ENCODE measurements at regions of chr15 and their contacts with region 1.

Region 1: DNA sequence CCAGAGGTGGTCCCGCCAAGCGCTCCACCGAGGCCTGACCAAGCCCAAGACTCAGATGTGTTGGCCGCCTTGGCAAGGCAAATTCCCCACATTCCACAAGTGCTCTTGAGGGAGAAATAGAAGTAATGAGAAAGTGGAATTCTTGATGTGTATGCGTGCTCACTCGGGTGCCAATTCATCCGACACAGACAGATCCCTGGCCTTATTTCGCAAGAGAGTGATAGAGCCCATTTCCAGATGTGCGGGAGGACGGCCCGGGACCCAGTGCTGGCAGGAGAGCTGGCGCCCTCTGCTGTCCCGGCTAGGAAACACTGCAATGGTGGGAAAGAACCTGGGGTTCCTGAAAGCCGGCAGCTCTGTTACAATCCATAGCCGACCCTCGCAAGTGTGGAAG is 76.0 kb downstream of the HMG20A start:
- DNase-seq: peak; percentile 50 to 82 (median 73)
- ATAC-seq: peak; percentile 73
- H3K4me3 ChIP-seq: no peak overlapping the region
- H3K4me3 Mint-ChIP-seq: no peak overlapping the region
- H3K27ac ChIP-seq: no peak overlapping the region
- H3K27ac Mint-ChIP-seq: no peak overlapping the region
- H3K4me1 ChIP-seq: peaks cover 9% of the 10 kb centered on the region
- H3K4me1 Mint-ChIP-seq: peaks cover 17% of the 10 kb centered on the region
- H3K27me3 ChIP-seq: no peaks in the 10 kb centered on the region
- H3K27me3 Mint-ChIP-seq: no peaks in the 10 kb centered on the region
- CTCF ChIP-seq: peak; percentile 86

Region 2: GRCh38 chr15:77024271-77025082 is 472.2 kb before region 1 on chr15:
- CTCF ChIA-PET with region 1: interaction called, 3 read pairs
- POLR2A ChIA-PET with region 1: no interaction called
- intact Hi-C with region 1: loop called in 1 of 2 experiments (anchors 5 kb)
- DNase-seq: peak; percentile 39 to 83 (median 71)
- ATAC-seq: no peak
- H3K4me3 ChIP-seq: no peak overlapping the region
- H3K4me3 Mint-ChIP-seq: no peak overlapping the region
- H3K27ac ChIP-seq: peak overlapping the region in 1 of 2 experiments; percentile 85
- H3K27ac Mint-ChIP-seq: peak overlapping the region; percentile 74
- H3K4me1 ChIP-seq: peaks cover 49% of the 10 kb centered on the region
- H3K4me1 Mint-ChIP-seq: peaks cover 56% of the 10 kb centered on the region
- H3K27me3 ChIP-seq: no peaks in the 10 kb centered on the region
- H3K27me3 Mint-ChIP-seq: no peaks in the 10 kb centered on the region
- CTCF ChIP-seq: peak; percentile 96

Region 3: GRCh38 chr15:77107531-77108355 is 389.0 kb before region 1 on chr15:
- CTCF ChIA-PET with region 1: interaction called, 13 read pairs
- POLR2A ChIA-PET with region 1: no interaction called
- intact Hi-C with region 1: no loop called
- DNase-seq: peak in 7 of 9 experiments; percentile 8 to 49 (median 32)
- ATAC-seq: no peak
- H3K4me3 ChIP-seq: no peak overlapping the region
- H3K4me3 Mint-ChIP-seq: no peak overlapping the region
- H3K27ac ChIP-seq: no peak overlapping the region
- H3K27ac Mint-ChIP-seq: no peak overlapping the region
- H3K4me1 ChIP-seq: no peaks in the 10 kb centered on the region
- H3K4me1 Mint-ChIP-seq: no peaks in the 10 kb centered on the region
- H3K27me3 ChIP-seq: no peaks in the 10 kb centered on the region
- H3K27me3 Mint-ChIP-seq: no peaks in the 10 kb centered on the region
- CTCF ChIP-seq: no peak

Region 4: GRCh38 chr15:77118882-77119321 is 377.8 kb before region 1 on chr15:
- CTCF ChIA-PET with region 1: interaction called, 100 read pairs
- POLR2A ChIA-PET with region 1: interaction called, 4 read pairs
- intact Hi-C with region 1: loop called (anchors 1 kb)
- DNase-seq: peak in 6 of 9 experiments; percentile 18 to 78 (median 32)
- ATAC-seq: peak; percentile 55
- H3K4me3 ChIP-seq: no peak overlapping the region
- H3K4me3 Mint-ChIP-seq: no peak overlapping the region
- H3K27ac ChIP-seq: no peak overlapping the region
- H3K27ac Mint-ChIP-seq: no peak overlapping the region
- H3K4me1 ChIP-seq: peaks cover 3% of the 10 kb centered on the region
- H3K4me1 Mint-ChIP-seq: peaks cover 7% of the 10 kb centered on the region
- H3K27me3 ChIP-seq: no peaks in the 10 kb centered on the region
- H3K27me3 Mint-ChIP-seq: no peaks in the 10 kb centered on the region
- CTCF ChIP-seq: peak; percentile 71

Region 5: GRCh38 chr15:77186594-77187011 is 310.1 kb before region 1 on chr15:
- CTCF ChIA-PET with region 1: interaction called, 16 read pairs
- POLR2A ChIA-PET with region 1: no interaction called
- intact Hi-C with region 1: loop called (anchors 1 kb)
- DNase-seq: peak in 3 of 9 experiments; percentile 26 to 63 (median 46)
- ATAC-seq: no peak
- H3K4me3 ChIP-seq: no peak overlapping the region
- H3K4me3 Mint-ChIP-seq: no peak overlapping the region
- H3K27ac ChIP-seq: no peak overlapping the region
- H3K27ac Mint-ChIP-seq: no peak overlapping the region
- H3K4me1 ChIP-seq: peaks cover 18% of the 10 kb centered on the region
- H3K4me1 Mint-ChIP-seq: peaks cover 41% of the 10 kb centered on the region
- H3K27me3 ChIP-seq: no peaks in the 10 kb centered on the region
- H3K27me3 Mint-ChIP-seq: no peaks in the 10 kb centered on the region
- CTCF ChIP-seq: peak; percentile 60

Region 6: DNA sequence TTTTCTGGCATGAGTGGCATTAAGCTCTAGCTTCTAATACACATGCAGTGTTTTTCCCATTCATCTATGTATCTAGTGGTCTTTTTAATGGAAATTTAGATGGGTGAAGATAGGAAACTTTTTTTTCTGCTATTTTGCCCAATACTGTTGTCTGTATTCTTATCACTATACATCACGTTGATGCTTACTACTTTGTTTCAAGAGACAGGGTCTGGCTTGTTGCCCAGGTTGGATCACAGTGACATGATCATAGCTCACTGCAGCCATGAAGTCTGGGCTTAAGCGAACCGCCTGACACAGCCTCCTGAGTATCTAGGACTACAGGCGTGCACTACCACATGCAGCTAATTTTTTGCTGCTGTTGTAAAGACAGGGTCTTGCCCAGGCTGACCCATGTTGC is 161.4 kb before region 1 on chr15:
- CTCF ChIA-PET with region 1: no interaction called
- POLR2A ChIA-PET with region 1: no interaction called
- intact Hi-C with region 1: no loop called
- DNase-seq: no peak
- ATAC-seq: no peak
- H3K4me3 ChIP-seq: no peak overlapping the region
- H3K4me3 Mint-ChIP-seq: no peak overlapping the region
- H3K27ac ChIP-seq: no peak overlapping the region
- H3K27ac Mint-ChIP-seq: no peak overlapping the region
- H3K4me1 ChIP-seq: no peaks in the 10 kb centered on the region
- H3K4me1 Mint-ChIP-seq: peaks cover 2% of the 10 kb centered on the region
- H3K27me3 ChIP-seq: no peaks in the 10 kb centered on the region
- H3K27me3 Mint-ChIP-seq: no peaks in the 10 kb centered on the region
- CTCF ChIP-seq: no peak

Region 7: DNA sequence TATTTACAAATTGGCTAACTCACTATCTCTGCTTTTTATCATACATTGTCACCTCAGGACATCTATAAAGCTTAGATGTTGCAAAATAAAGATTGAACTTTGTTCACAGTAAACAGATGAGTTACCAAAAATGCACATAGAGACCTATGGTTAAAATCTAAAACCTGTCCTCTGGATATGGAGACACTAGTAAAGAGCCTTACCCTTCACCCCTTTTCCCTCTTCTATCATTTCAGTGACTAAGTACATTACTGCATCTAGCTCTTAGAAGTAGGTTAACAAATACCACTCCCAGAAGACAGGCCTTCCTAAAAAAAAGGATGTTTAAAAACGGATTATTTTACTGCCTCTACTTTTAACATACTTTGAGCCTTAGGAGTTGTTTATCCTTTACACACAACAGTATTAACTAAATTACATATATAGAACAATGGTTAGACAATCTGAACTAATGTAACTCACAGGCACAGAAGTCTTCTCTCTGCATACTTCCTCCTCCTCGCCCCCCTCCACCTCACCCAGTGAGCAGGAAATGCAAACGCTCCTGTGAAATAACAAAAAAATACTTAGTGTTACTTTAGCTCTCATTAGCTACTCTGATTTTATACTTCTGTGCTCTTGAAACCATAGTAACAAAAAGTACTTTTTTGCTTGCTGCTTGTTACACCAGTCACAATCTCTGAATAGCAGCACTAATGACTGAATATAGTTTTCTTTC is 964.6 kb after region 1 on chr15:
- CTCF ChIA-PET with region 1: no interaction called
- POLR2A ChIA-PET with region 1: no interaction called
- intact Hi-C with region 1: no loop called
- DNase-seq: peak in 7 of 9 experiments; percentile 15 to 58 (median 33)
- ATAC-seq: peak; percentile 82
- H3K4me3 ChIP-seq: no peak overlapping the region
- H3K4me3 Mint-ChIP-seq: no peak overlapping the region
- H3K27ac ChIP-seq: peak overlapping the region in 1 of 2 experiments; percentile 38
- H3K27ac Mint-ChIP-seq: peak overlapping the region; percentile 58
- H3K4me1 ChIP-seq: peaks cover 20% of the 10 kb centered on the region
- H3K4me1 Mint-ChIP-seq: peaks cover 53% of the 10 kb centered on the region
- H3K27me3 ChIP-seq: no peaks in the 10 kb centered on the region
- H3K27me3 Mint-ChIP-seq: no peaks in the 10 kb centered on the region
- CTCF ChIP-seq: no peak